ENCODE measurements at regions of chr7 and their contacts with region 1.

Region 1: DNA sequence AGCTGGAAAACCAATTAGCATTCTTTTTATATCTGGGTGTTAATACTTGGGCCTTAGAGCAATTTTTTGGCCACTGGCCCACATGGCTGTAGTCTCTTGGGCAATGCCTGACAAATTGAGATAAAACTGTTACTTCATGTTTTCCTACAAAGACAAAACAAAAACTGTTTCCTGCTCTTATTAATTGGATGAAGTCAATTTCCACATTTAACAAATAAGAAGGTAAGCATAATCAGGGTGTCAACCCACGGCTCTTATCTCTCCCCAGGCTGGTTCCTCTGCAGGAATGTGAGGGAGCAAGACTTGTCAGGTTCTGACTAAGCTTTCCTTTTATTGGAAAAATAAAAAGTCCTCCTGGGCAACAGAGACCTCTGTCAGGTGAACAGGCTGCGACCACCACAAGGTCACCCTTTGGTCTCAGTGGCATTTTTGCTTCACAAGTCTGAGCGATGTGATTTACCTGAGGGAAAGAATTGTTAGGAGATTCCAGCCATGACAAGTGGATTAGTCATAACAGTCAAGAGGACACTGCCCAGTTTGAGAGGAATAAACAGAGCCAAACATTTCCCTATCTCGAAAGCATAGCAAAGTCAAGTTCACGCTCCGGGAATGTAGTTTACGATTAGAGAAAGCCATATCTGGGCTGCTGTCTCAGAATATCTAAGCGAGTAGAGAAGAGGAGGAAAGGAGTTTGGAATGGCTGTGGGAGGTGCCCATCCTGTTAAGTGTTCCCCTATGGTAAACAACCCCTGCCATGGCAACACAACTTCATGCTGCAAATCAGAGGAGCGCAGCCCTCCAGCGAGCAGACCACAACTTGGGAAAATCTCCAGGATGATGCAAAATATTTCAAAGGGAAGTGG is 144.4 kb downstream of the TES start:
- DNase-seq: peak; percentile 69
- ATAC-seq: peak; percentile 89

Region 2: GRCh38 chr7:116316833-116317612 is 37.8 kb before region 1 on chr7:
- intact Hi-C with region 1: loop called (anchors 5 kb)
- DNase-seq: no peak
- ATAC-seq: peak; percentile 86

Region 3: GRCh38 chr7:116438267-116438666 is 83.5 kb after region 1 on chr7:
- intact Hi-C with region 1: loop called (anchors 5 kb)
- DNase-seq: no peak
- ATAC-seq: no peak

Region 4: DNA sequence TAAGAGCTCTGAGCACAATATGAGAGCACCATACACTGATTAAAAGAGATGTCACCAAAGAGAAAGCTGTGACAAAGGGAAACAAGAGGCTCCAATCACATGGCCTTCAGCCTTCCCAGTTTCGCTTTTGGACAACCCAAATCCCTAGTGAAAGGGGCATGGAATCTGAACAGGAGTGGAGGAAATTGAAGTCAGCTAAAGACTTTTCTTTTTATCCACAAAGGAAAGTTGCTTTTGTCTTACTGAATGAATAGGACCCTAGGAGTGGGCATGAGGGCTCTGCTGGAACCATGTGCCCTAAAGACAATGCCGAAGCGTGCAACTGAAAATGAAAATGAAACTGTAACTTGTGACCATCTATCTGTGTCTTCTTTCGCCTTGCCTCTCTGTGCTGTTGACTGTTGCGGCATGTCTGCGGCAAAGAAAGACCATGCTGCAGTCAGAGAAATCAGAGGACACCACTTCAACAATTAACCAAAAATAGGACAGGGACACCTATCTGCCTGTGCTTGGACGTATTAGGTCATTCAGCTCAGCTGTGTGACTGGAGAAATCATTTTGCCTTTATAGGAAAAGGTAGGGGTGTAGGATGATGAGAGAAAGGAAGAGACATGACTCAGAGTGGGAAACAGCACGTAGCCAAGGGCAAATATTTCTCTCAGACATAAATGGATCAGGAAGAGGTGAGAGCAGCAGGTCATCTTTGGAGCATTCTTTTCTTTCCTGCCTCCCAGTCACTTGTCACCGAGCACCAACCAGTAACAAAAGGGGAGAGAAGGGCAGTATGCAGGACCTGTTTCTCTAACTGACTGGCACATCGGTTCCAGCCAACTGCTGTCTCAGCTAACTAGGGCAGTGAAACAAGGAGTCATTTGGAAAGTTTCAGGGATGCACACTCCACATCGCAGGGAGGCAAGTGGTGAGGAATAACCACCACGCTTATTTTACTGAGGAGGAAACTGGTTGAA is 157.1 kb after region 1 on chr7:
- intact Hi-C with region 1: loop called (anchors 5 kb)
- DNase-seq: no peak
- ATAC-seq: peak; percentile 93

Measured in Right ventricle myocardium inferior (tissue), 1 donor.